ENCODE measurements at regions of chrX and their contacts with region 1.

Region 1: DNA sequence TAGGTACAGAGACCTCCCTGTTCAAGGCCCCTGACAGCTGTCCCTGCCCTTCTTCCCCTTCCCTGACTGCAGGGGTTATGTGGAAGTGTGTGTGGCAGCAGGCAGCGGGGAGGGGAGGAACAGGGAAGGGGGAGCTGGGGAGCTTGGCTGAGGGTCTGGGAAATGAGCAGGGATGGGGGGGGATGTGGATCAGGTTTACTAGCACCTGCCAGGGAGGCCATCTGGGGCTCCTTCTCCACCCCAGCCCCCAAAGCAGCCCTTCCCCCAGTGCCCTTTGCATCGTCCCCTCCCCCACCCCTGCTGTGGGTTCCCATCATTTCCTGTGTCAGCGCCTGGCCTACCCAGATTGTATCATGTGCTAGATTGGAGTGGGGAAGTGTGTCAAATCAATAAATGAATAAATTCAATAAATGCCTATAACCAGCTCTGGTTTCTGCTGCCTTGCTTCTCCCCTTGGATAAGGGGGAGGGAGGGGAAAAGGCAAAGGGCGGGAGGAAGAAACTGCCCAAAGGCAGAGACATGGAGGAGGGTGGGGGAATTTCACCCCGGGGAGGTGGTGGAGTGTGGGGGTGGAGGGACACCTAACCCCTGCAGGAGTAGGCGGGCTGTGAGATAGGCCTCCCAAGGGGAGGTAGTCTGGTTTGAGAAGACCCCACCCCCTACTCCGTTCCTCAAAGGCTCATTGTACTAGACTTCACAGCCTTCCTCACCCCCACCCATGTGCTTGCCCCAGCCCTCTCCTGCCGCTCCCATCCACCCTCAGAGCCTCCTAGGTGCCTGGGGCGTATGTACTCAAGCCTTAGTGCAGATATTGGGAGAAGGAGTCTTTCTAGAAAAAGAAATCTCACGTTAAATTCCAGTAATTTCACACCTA is 3.2 kb downstream of the CXorf65 start:
- DNase-seq: peak; percentile 71
- H3K4me3 Mint-ChIP-seq: peak overlapping the region; percentile 56
- H3K27ac Mint-ChIP-seq: peak overlapping the region; percentile 83
- H3K4me1 Mint-ChIP-seq: peaks cover 78% of the 10 kb centered on the region
- H3K27me3 Mint-ChIP-seq: no peaks in the 10 kb centered on the region

Region 2: GRCh38 chrX:71118032-71118984 is 15.0 kb after region 1 on chrX and contains the start of gene MED12:
- CTCF ChIA-PET with region 1: interaction called, 11 read pairs
- POLR2A ChIA-PET with region 1: interaction called, 7 read pairs
- intact Hi-C with region 1: no loop called
- DNase-seq: peak; percentile 90
- H3K4me3 Mint-ChIP-seq: peak within 1 kb of the TSS; percentile 75
- H3K27ac Mint-ChIP-seq: peak within 1 kb of the TSS; percentile 89
- H3K4me1 Mint-ChIP-seq: peaks cover 38% of the 10 kb centered on the region
- H3K27me3 Mint-ChIP-seq: no peaks in the 10 kb centered on the region
- total RNA-seq, gene MED12: 46.9 to 50.1 TPM

Region 3: DNA sequence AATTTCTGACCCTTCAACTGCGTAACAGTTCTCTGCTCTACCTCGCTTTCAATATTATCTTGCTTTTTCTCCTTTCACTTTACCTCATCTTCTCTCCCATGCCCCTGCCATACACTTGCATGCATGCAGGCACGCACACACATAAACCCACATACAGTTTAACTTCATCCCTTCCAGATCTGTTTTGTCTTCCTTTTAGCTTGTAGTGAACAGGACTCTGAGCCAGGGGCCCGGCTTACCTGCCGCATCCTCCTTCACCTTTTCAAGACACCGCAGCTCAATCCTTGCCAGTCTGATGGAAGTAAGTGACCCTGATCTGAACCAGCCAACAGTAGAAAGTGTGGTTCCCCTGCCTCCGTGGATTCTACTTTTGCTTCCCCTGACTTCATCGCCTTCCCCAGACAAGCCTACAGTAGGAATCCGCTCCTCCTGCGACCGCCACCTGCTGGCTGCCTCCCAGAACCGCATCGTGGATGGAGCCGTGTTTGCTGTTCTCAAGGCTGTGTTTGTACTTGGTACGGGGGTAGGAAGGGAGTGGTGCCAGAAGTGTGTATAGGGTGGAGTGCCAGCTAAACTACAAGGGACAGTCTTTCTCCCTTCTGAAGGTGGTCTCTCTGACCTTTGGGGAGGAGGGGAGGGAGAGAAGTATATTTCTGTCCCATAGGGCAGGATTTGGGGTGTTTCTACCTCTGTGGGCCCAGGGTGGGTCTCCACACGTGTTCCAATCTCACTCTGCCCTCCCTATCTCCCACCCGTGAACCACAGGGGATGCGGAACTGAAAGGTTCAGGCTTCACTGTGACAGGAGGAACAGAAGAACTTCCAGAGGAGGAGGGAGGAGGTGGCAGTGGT is 25.8 kb after region 1 on chrX:
- CTCF ChIA-PET with region 1: interaction called, 33 read pairs
- POLR2A ChIA-PET with region 1: no interaction called
- intact Hi-C with region 1: loop called (anchors 1 kb)
- DNase-seq: peak; percentile 81
- H3K4me3 Mint-ChIP-seq: no peak overlapping the region
- H3K27ac Mint-ChIP-seq: peak overlapping the region; percentile 83
- H3K4me1 Mint-ChIP-seq: peaks cover 12% of the 10 kb centered on the region
- H3K27me3 Mint-ChIP-seq: no peaks in the 10 kb centered on the region

Measured in activated CD4-positive, alpha-beta memory T cell treated with anti-CD3 and anti-CD28 coated beads for 36 hours (primary cell).